Right cardiac atrium (tissue), 5 donors: ENCODE measurements at regions of chr9 and their contacts with region 1.

Region 1: GRCh38 chr9:137123468-137123837 is 8.9 kb upstream of the DPP7 start:
- DNase-seq: peak in 1 of 3 donors; percentile 2
- ATAC-seq: no peak
- H3K4me3 ChIP-seq: no peak overlapping the region
- H3K27ac ChIP-seq: no peak overlapping the region
- H3K4me1 ChIP-seq: peaks cover 4% of the 10 kb centered on the region
- H3K27me3 ChIP-seq: no peaks in the 10 kb centered on the region

Region 2: GRCh38 chr9:137176302-137177182 is 53.1 kb after region 1 on chr9:
- intact Hi-C with region 1: no loop called
- DNase-seq: no peak
- ATAC-seq: no peak
- H3K4me3 ChIP-seq: no peak overlapping the region
- H3K27ac ChIP-seq: no peak overlapping the region
- H3K4me1 ChIP-seq: no peaks in the 10 kb centered on the region
- H3K27me3 ChIP-seq: no peaks in the 10 kb centered on the region

Region 3: DNA sequence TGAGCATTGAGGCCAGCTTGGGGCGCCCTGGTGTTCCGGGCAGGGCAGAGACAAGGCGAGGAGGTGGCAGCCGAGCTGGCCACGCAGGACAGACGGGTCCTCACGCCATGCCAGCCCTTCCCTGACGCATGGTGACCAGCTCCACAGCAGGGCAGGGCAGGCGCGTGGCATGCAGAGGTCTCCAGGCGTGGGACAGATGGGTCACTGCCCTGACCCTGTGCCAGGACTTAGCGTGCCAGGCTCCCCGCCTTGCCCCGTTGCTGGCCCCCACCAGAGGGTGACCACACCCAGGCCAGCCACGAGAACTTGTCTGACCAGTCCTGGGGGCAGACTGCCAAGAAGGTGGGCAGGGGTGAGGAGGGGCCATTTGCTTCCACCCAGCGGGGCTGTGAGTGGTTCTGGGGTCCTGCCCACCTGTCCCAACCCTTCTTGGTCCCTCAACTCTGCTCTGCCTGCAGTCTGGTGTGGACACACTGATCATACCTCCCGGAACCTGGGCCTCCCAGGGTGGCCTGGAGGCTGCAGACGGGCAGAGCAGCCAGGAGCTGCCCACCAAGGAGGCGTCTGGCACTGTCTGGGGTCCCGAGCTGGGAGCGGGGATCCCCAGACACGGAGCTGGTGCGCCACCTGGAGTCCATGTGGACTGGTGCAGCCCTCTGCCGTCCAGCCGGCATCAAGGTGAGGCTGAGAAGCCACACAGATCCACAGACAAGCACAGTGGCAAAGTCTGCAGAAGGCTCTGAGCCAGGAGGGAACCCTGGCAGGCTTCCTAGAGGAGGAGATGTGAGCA is 103.8 kb after region 1 on chr9 and contains the start of gene RNF224:
- intact Hi-C with region 1: loop called (anchors 2 to 5 kb)
- DNase-seq: peak; percentile 77 to 89 (median 89)
- ATAC-seq: peak; percentile 8 to 28
- H3K4me3 ChIP-seq: no peak within 1 kb of the TSS
- H3K27ac ChIP-seq: no peak within 1 kb of the TSS
- H3K4me1 ChIP-seq: peaks cover 5% of the 10 kb centered on the region
- H3K27me3 ChIP-seq: no peaks in the 10 kb centered on the region
- total RNA-seq, gene RNF224: not detected

Region 4: DNA sequence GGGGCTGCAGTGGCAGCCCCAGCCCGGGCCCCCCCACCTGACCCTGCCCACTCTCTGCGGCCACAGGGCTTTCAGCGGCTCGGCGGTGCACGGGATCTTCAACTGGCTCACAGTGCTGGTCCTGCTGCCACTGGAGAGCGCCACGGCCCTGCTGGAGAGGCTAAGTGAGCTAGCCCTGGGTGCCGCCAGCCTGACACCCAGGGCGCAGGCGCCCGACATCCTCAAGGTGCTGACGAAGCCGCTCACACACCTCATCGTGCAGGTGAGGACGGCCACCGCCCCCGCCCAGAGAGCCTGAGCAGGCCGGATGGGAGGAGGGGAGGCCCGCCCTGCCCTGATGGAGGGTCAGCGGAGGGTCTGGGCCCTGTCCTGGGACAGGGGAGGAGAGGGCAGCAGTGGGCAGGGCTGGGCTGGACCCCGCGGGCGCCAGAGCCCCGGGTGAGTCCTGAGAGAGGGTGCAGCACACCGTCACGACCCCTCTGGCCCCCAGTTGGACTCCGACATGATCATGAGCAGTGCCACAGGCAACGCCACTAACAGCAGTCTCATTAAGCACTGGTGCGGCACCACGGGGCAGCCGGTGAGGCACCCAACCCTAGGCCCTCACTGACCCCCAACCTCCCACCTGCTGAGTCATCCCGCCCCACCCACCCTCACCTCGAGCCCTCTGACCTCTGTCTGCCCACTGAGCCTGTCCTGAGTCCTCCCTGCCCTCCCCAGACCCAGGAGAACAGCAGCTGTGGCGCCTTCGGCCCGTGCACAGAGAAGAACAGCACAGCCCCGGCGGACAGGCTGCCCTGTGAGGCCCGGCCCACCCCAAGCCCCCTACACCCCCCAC is 109.9 kb after region 1 on chr9:
- intact Hi-C with region 1: loop called (anchors 2 to 5 kb)
- DNase-seq: no peak
- ATAC-seq: no peak
- H3K4me3 ChIP-seq: no peak overlapping the region
- H3K27ac ChIP-seq: no peak overlapping the region
- H3K4me1 ChIP-seq: no peaks in the 10 kb centered on the region
- H3K27me3 ChIP-seq: no peaks in the 10 kb centered on the region